Calu3 (cell line): ENCODE measurements at regions of chr21 and their contacts with region 1.

Region 1: DNA sequence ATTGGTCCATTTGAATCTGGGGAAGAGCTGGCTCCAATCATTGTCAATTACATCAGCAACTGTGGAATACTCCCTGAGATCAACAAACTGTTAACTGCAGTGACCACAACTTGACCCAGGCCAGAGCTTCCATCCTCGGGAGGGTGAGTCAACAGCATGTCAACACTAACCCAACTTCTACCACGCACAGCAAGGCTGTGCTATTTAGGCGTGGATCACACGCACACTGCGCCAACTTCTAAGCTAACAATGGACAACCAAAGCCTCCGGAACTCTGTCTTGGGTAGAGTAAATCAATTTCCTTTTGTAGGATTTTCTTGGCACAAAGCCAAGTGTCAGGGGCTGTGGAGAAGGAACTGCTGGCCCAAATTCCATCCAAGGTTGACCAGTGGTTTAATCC is 30.4 kb downstream of the APP start:
- DNase-seq: peak; percentile 77
- H3K4me3 Mint-ChIP-seq: peak overlapping the region; percentile 46
- H3K27ac Mint-ChIP-seq: peak overlapping the region; percentile 91
- H3K4me1 Mint-ChIP-seq: peaks cover 38% of the 10 kb centered on the region
- H3K27me3 Mint-ChIP-seq: no peaks in the 10 kb centered on the region
- CTCF ChIP-seq: no peak

Region 2: DNA sequence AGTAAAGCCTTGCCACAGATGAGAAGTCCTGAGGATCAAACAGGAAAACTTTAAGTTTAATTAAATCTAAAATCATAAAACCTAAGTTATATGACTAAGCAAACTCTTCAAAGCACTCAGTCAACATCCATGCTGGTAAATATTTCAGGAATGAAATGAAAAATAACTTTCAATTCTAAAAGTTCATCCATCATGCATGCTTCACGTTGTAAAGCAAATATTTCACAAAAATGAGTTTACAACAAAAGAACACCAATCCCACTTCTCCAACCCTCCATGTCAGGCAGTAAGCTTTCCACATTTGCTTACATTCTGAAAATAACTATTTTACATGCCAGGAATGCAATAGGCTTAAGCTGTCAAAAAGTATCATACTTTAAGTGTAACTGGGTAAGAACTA is 13.6 kb after region 1 on chr21:
- CTCF ChIA-PET with region 1: no interaction called
- intact Hi-C with region 1: loop called (anchors 2 kb)
- DNase-seq: no peak
- H3K4me3 Mint-ChIP-seq: no peak overlapping the region
- H3K27ac Mint-ChIP-seq: no peak overlapping the region
- H3K4me1 Mint-ChIP-seq: peaks cover 25% of the 10 kb centered on the region
- H3K27me3 Mint-ChIP-seq: no peaks in the 10 kb centered on the region
- CTCF ChIP-seq: no peak